HEK293 (cell line): ENCODE measurements at regions of chr19 and their contacts with region 1.

Region 1: GRCh38 chr19:54168174-54168917 is 4.6 kb downstream of the TMC4 start:
- H3K4me3 ChIP-seq: no peak overlapping the region
- H3K27ac ChIP-seq: no peak overlapping the region
- H3K4me1 ChIP-seq: no peaks in the 10 kb centered on the region
- CTCF ChIP-seq: peak; percentile 83

Region 2: DNA sequence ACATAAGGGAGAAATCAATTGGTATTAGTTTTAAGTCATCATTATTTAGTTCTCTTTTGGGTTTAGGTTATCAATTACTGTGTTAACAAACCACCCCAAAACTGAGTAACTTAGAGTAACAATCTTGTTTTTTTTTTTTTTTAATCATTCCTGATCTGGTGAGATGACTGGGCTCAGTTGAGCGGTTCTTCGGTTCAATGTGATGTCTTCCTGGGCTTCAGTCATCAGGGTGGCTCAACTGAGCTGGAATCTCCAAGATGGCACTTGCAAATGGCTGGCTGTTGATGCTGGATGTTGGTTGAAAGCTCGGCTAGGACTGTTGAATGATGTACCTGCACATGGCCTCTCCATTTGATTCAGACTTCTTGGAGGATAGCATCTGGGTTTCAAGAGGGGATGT is 83.9 kb before region 1 on chr19:
- CTCF ChIA-PET with region 1: no interaction called
- POLR2A ChIA-PET with region 1: no interaction called
- H3K4me3 ChIP-seq: no peak overlapping the region
- H3K27ac ChIP-seq: no peak overlapping the region
- H3K4me1 ChIP-seq: no peaks in the 10 kb centered on the region
- CTCF ChIP-seq: no peak

Region 3: GRCh38 chr19:54179921-54180461 is 11.6 kb after region 1 on chr19:
- CTCF ChIA-PET with region 1: interaction called, 15 read pairs
- POLR2A ChIA-PET with region 1: interaction called, 20 read pairs
- H3K4me3 ChIP-seq: no peak overlapping the region
- H3K27ac ChIP-seq: no peak overlapping the region
- H3K4me1 ChIP-seq: no peaks in the 10 kb centered on the region
- CTCF ChIP-seq: peak; percentile 95

Region 4: GRCh38 chr19:54203151-54203611 is 34.8 kb after region 1 on chr19:
- CTCF ChIA-PET with region 1: interaction called, 3 read pairs
- POLR2A ChIA-PET with region 1: interaction called, 17 read pairs
- H3K4me3 ChIP-seq: no peak overlapping the region
- H3K27ac ChIP-seq: no peak overlapping the region
- H3K4me1 ChIP-seq: peaks cover 10% of the 10 kb centered on the region
- CTCF ChIP-seq: no peak

Region 5: GRCh38 chr19:54231077-54231931 is 63.0 kb after region 1 on chr19:
- CTCF ChIA-PET with region 1: interaction called, 10 read pairs
- POLR2A ChIA-PET with region 1: interaction called, 3 read pairs
- H3K4me3 ChIP-seq: no peak overlapping the region
- H3K27ac ChIP-seq: no peak overlapping the region
- H3K4me1 ChIP-seq: peaks cover 2% of the 10 kb centered on the region; the same call in 1 of the 2 replicates
- CTCF ChIP-seq: peak; percentile 95